Activated CD4-positive, alpha-beta T cell treated with anti-CD3 and anti-CD28 coated beads for 36 hours (primary cell): ENCODE measurements at regions of chr16 and their contacts with region 1.

Region 1: DNA sequence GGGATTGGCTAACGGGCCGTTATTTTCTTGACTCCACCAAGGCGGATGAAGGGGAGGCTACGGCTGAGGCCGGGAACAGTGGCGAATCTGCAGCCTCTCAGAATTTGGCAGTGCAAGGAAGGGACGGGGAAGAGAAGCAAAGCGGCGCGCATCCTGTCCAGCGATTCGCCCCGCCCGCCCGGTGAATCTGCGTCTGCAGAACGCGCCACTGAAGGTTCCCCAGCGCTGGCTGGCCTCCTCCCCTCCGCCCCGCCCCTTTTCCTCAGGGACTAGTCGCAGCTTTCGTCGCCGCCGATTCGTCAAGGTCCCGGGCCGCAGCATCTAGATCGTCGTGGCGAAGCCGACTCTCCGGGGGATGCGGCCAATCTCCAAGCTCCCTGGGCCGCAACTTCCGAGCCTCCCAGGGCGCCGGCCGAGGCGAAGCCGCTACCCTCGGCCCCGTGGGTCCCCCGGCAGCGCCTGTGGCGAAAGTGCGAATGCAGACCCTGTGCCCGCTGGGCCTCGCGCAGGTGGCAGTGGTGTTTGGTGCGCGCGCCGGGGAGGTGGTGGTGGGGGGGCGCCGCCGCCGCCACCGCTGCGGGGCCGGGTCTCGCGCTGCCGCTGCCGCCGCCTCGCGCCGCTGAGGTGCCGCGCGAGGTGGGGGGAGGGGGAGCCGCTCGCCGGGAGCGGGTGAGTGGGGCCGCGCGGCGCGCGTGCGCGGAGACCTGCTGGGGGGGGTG is at the start of gene SETD1A:
- DNase-seq: peak; percentile 99
- ATAC-seq: peak; percentile 89
- H3K4me3 Mint-ChIP-seq: peak within 1 kb of the TSS; percentile 93
- H3K27ac Mint-ChIP-seq: peak within 1 kb of the TSS; percentile 99
- H3K4me1 Mint-ChIP-seq: peaks cover 37% of the 10 kb centered on the region
- H3K27me3 Mint-ChIP-seq: no peaks in the 10 kb centered on the region
- total RNA-seq, gene SETD1A: 18.5 to 21.7 TPM

Region 2: GRCh38 chr16:30813821-30814189 is 143.8 kb before region 1 on chr16:
- CTCF ChIA-PET with region 1: interaction called, 4 read pairs
- POLR2A ChIA-PET with region 1: no interaction called
- intact Hi-C with region 1: loop called in 1 of 2 experiments (anchors 1 kb)
- DNase-seq: no peak
- ATAC-seq: peak; percentile 4
- H3K4me3 Mint-ChIP-seq: peak overlapping the region; percentile 87
- H3K27ac Mint-ChIP-seq: peak overlapping the region; percentile 81
- H3K4me1 Mint-ChIP-seq: peaks cover 12% of the 10 kb centered on the region
- H3K27me3 Mint-ChIP-seq: no peaks in the 10 kb centered on the region

Region 3: DNA sequence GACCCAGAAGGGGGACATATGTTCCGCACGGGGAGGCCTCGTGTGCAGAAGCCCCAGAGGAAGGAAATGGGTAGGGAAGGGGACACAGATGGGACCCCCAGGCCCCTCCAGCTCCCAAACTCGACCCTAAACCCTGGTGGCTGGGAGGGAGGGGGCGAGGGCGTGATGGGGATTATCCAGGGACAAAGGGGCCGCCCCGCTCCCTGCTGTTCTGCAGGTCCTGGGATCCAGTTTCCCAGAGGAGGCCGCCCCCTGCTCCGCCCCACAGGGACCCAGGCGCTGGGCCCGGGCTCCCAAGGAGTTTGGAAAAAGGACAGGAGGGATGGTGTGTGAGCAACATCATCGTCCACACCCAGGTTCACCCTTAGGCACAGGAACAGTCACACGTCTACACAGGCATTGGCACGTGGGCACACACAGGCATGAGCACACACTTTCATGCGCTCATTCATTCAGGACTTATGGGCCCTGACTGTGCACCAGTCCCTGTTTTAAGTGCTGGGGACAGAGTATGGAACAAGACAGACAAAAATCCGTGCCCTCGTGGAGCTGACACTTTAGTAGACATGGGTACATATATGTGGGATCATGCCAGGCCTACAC is 47.1 kb before region 1 on chr16:
- CTCF ChIA-PET with region 1: no interaction called
- POLR2A ChIA-PET with region 1: no interaction called
- intact Hi-C with region 1: no loop called
- DNase-seq: no peak
- ATAC-seq: no peak
- H3K4me3 Mint-ChIP-seq: no peak overlapping the region
- H3K27ac Mint-ChIP-seq: no peak overlapping the region
- H3K4me1 Mint-ChIP-seq: peaks cover 6% of the 10 kb centered on the region
- H3K27me3 Mint-ChIP-seq: no peaks in the 10 kb centered on the region

Region 4: GRCh38 chr16:30934827-30935557 is 22.6 kb before region 1 on chr16:
- CTCF ChIA-PET with region 1: interaction called, 11 read pairs
- POLR2A ChIA-PET with region 1: no interaction called
- intact Hi-C with region 1: no loop called
- DNase-seq: peak; percentile 76
- ATAC-seq: peak; percentile 83
- H3K4me3 Mint-ChIP-seq: no peak overlapping the region
- H3K27ac Mint-ChIP-seq: peak overlapping the region; percentile 29
- H3K4me1 Mint-ChIP-seq: peaks cover 12% of the 10 kb centered on the region
- H3K27me3 Mint-ChIP-seq: no peaks in the 10 kb centered on the region

Region 5: DNA sequence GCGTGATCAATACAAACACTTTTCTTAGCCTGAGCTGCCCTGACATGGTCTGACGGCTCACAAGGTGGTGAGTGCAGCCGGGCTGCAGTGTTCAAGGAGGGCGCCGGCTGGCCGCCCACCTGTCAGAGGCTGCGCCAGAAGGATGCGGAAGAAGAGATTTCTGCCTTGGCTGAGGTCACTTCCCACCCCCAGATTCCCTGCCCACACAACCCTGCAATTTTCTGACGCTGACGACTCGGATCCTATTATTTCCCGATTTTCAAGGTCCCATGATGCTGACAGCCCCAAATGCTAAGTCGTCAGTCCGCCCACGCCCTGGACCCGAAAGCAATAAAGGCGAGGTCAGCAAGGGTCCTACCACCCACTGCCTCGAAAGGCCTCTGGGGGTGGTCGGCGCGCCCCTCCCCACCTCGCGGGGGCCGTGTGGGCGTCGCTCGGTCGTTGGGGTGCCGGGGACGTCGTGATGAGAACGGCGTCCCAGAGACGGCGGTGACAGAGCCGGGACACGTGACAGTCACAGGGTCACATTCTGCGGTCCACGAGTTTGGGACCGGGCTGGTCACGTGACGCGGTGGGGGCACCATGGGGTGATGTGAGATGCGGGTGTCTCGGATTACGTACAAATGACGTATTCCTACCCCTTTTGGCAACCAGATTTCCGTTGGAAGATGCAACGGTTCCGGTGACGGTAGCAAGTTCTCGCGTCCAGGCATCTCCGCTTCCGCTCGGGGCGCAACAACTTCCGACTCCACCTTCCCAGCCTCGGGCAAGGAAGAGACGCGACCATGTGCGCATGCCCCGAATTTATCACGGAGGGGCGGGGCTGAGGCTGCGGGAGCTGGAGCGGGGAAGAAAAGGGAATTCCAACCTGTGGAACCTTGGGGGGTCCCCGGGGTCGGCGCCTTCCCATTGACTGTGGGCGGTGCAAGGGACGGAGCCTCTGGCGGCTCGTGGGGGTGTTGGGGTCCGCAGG is 75.4 kb after region 1 on chr16 and contains the start of gene STX4:
- CTCF ChIA-PET with region 1: no interaction called
- POLR2A ChIA-PET with region 1: no interaction called
- intact Hi-C with region 1: loop called (anchors 1 to 2 kb)
- DNase-seq: peak; percentile 99
- ATAC-seq: peak; percentile 89
- H3K4me3 Mint-ChIP-seq: peak within 1 kb of the TSS; percentile 96
- H3K27ac Mint-ChIP-seq: peak within 1 kb of the TSS; percentile 93
- H3K4me1 Mint-ChIP-seq: peaks cover 15% of the 10 kb centered on the region
- H3K27me3 Mint-ChIP-seq: no peaks in the 10 kb centered on the region
- total RNA-seq, gene STX4: 29.2 to 35.9 TPM

Region 6: DNA sequence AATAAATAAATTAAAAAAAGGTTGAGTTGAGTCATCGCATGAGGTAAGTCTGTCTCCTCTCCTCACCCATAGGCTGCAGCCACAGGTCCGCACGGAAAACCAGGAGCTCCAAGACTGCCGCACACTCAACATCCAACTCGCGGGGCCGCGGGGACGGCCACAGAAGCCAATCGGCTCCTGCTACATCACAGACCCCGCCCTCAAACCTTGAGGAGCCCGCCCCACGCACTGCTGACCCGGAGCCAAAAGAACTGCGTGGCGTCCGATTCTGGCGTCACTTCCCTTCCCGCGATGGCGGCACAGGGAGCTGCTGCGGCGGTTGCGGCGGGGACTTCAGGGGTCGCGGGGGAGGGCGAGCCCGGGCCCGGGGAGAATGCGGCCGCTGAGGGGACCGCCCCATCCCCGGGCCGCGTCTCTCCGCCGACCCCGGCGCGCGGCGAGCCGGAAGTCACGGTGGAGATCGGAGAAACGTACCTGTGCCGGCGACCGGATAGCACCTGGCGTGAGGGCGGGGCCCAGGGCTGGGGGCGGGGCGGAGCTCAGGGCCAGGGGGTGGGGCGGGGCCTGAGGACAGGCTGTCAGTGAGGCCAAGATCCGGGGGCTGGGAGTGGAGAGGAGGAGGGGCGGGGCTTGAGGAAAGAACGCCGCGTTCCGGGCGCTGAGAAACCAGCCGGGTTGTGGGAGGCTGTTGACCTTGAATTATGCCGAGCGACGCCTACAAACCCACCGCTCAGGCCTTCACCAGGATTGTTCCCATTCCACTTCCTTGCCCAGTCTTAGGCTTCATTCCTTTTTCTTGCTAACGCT is 160.0 kb after region 1 on chr16 and contains the start of gene KAT8:
- CTCF ChIA-PET with region 1: no interaction called
- POLR2A ChIA-PET with region 1: no interaction called
- intact Hi-C with region 1: loop called in 1 of 2 experiments (anchors 1 kb)
- DNase-seq: peak; percentile 99
- ATAC-seq: peak; percentile 93
- H3K4me3 Mint-ChIP-seq: peak within 1 kb of the TSS; percentile 88
- H3K27ac Mint-ChIP-seq: peak within 1 kb of the TSS; percentile 83
- H3K4me1 Mint-ChIP-seq: peaks cover 14% of the 10 kb centered on the region
- H3K27me3 Mint-ChIP-seq: no peaks in the 10 kb centered on the region
- total RNA-seq, gene KAT8: 53.6 to 63.1 TPM

Region 7: DNA sequence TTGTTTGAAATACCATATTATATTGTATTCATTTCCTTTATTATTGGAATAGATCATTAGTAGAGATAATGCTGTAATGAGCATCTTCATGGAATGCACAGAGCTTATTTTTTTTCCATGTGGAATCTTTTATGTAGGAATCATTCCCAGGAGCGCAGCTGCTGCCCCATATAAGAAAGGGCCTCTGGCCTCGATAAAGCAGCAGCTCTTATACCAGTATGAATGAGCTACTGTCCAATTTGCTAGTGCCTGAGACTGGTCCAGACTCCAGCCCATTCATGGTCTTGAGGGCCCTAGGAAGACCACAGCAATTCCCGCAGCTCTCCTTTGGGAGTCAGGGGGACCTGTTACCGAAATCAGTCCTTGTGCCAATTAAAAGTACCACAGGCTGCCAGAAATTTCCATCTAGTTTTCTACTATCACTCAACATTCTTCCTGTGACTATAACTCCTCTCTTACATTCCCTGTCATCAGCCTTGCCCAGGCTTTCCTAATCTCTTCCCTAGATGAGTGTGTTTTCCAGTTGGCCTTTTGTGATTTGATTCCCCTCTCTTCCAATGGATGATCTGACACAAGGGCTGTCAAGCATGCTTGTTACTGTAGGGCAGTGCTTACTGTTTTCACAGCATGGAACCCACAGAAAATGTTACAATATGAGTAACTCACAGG is 483.0 kb after region 1 on chr16:
- CTCF ChIA-PET with region 1: no interaction called
- POLR2A ChIA-PET with region 1: interaction called, 4 read pairs
- intact Hi-C with region 1: loop called in 1 of 2 experiments (anchors 5 kb)
- DNase-seq: no peak
- ATAC-seq: no peak
- H3K4me3 Mint-ChIP-seq: no peak overlapping the region
- H3K27ac Mint-ChIP-seq: no peak overlapping the region
- H3K4me1 Mint-ChIP-seq: peaks cover 18% of the 10 kb centered on the region
- H3K27me3 Mint-ChIP-seq: peaks cover 2% of the 10 kb centered on the region